HAP-1 (cell line): ENCODE measurements at regions of chr3 and their contacts with region 1.

Region 1: GRCh38 chr3:138594150-138594934 is at the start of gene CEP70:
- DNase-seq: peak; percentile 95 to 97
- H3K4me3 ChIP-seq: peak within 1 kb of the TSS; percentile 74
- H3K4me1 ChIP-seq: peaks cover 13% of the 10 kb centered on the region
- H3K27me3 ChIP-seq: no peaks in the 10 kb centered on the region

Region 2: DNA sequence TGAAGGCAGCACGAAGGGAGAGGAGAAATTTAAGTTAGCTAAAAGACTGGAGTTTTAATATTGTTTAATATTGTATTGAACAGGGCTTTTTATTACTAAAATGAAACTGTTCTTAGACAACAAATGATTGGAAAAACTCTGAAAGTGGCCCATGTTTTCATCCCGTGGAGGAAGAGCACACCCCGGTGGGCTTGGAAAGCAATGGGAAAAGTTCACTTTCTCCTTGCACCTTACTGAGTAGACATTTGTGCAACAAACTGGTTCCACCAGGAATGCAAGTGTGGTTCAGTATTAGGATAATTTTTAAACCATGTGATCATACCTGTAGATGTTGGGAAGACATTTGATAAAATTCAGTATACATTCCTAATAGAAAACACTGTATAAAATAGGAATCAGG is 168.1 kb before region 1 on chr3:
- in situ Hi-C with region 1: no loop called
- DNase-seq: no peak
- H3K4me3 ChIP-seq: no peak overlapping the region
- H3K4me1 ChIP-seq: no peaks in the 10 kb centered on the region; the same call in 1 of the 2 replicates
- H3K27me3 ChIP-seq: no peaks in the 10 kb centered on the region

Region 3: DNA sequence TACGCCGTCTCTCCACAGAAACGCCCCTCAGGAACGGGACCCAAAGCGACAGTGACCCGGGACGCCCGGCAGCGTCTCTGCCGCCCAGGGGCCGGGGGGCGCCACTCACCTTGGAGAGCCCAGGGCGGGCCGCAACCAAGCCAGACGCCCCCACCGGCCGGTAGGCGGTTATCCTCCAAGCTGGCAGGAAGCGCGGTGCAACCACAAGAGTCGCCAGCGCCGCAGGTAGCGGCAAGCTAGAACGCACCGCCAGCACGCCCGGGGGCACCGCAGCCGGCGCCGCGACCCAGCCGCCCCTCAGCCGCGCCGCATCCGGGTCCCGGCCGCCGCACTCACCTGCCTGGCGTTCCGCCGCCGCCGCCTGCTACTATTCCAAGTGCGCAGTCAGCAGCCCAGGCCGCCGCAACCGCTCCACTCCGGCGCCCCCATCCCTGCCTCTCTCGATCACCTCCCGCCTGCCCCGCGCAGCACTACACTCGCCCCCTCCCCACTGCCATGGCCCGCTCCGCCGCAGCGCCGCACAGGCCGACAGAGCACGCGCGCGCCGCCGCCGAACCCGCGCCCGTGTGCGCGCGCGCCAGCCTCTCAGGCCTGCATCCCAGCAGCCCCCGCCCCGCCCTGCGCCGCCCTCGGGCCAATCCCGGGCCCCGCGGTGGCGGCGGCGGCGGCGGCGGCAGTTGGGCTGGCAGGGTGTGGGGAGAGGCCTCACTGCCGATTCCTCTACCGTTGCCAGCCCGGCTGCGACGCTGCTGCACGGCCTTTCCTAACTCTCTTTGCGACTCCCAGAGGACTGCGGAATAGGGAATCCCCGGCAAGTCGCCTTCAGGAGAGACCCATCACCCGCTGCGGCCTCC is 240.2 kb after region 1 on chr3 and contains the start of gene PIK3CB:
- in situ Hi-C with region 1: loop called (anchors 10 kb)
- DNase-seq: peak; percentile 83 to 94
- H3K4me3 ChIP-seq: peak within 1 kb of the TSS; percentile 88
- H3K4me1 ChIP-seq: peaks cover 7% of the 10 kb centered on the region
- H3K27me3 ChIP-seq: no peaks in the 10 kb centered on the region

Region 4: GRCh38 chr3:138915503-138916498 is 321.5 kb after region 1 on chr3:
- in situ Hi-C with region 1: loop called (anchors 5 kb)
- DNase-seq: peak; percentile 81 to 97
- H3K4me3 ChIP-seq: peak overlapping the region; percentile 62
- H3K4me1 ChIP-seq: 0 out of 2 replicates have a peak, but pooled peaks cover 2% of the 10 kb centered on the region
- H3K27me3 ChIP-seq: no peaks in the 10 kb centered on the region

Region 5: GRCh38 chr3:139151530-139151929 is 557.2 kb after region 1 on chr3:
- in situ Hi-C with region 1: no loop called
- DNase-seq: no peak
- H3K4me3 ChIP-seq: no peak overlapping the region
- H3K4me1 ChIP-seq: no peaks in the 10 kb centered on the region
- H3K27me3 ChIP-seq: no peaks in the 10 kb centered on the region